ENCODE measurements at regions of chr1 and their contacts with region 1.

Region 1: GRCh38 chr1:192516776-192517297 is 58.7 kb upstream of the RGS1 start:
- DNase-seq: peak; percentile 63
- ATAC-seq: peak; percentile 97
- H3K4me3 Mint-ChIP-seq: peak overlapping the region; percentile 40
- H3K27ac Mint-ChIP-seq: peak overlapping the region; percentile 63
- H3K4me1 Mint-ChIP-seq: peaks cover 62% of the 10 kb centered on the region
- H3K27me3 Mint-ChIP-seq: no peaks in the 10 kb centered on the region

Region 2: GRCh38 chr1:192477630-192478029 is 39.2 kb before region 1 on chr1:
- CTCF ChIA-PET with region 1: interaction called, 13 read pairs
- POLR2A ChIA-PET with region 1: no interaction called
- intact Hi-C with region 1: loop called (anchors 5 kb)
- DNase-seq: no peak
- ATAC-seq: peak; percentile 67
- H3K4me3 Mint-ChIP-seq: no peak overlapping the region
- H3K27ac Mint-ChIP-seq: no peak overlapping the region
- H3K4me1 Mint-ChIP-seq: peaks cover 2% of the 10 kb centered on the region
- H3K27me3 Mint-ChIP-seq: no peaks in the 10 kb centered on the region

Region 3: DNA sequence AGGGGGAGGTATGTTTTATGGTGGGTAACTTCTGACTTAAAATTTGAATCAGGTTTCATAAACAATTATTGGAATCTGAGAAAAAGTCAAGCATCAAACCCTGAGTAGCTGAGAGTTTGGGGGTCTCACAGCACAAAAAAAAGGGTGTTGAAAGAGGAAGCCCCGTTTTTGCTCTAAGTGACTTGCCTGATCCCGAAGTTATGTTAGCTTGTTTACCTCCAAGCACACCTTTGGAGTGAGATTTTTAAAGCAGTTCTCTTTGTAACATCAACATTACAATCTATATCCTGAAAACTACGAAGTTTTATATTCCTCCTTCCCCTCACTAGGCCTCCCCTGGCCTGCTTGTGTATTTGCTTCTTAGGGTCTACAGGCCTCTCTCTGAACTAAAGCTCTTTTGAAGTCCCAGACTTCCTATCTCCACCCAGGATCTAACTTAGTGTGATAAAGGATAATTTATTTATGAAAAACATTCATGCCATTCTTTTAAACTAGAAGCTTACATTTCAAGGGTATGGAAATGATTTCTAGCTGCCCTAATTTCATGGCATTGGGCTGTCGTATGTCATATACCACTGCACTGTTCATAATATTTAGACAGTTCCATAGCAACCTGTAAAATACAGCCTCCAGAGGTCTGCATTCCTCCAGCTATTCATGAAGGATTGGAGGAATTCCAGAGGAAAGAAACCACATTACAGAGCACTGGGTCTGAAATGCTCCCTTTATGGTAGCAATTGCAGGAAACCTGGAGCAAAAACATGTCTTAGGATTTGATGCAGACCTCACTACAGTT is 22.7 kb after region 1 on chr1:
- CTCF ChIA-PET with region 1: interaction called, 10 read pairs
- POLR2A ChIA-PET with region 1: interaction called, 3 read pairs
- intact Hi-C with region 1: loop called in 1 of 2 experiments (anchors 2 kb)
- DNase-seq: no peak
- ATAC-seq: no peak
- H3K4me3 Mint-ChIP-seq: peak overlapping the region; percentile 4
- H3K27ac Mint-ChIP-seq: peak overlapping the region; percentile 76
- H3K4me1 Mint-ChIP-seq: peaks cover 41% of the 10 kb centered on the region
- H3K27me3 Mint-ChIP-seq: no peaks in the 10 kb centered on the region

Region 4: GRCh38 chr1:192550922-192551534 is 34.2 kb after region 1 on chr1:
- CTCF ChIA-PET with region 1: interaction called, 3 read pairs
- POLR2A ChIA-PET with region 1: no interaction called
- intact Hi-C with region 1: loop called (anchors 1 to 5 kb)
- DNase-seq: peak; percentile 32
- ATAC-seq: peak; percentile 88
- H3K4me3 Mint-ChIP-seq: peak overlapping the region; percentile 20
- H3K27ac Mint-ChIP-seq: peak overlapping the region; percentile 76
- H3K4me1 Mint-ChIP-seq: peaks cover 53% of the 10 kb centered on the region
- H3K27me3 Mint-ChIP-seq: no peaks in the 10 kb centered on the region

Region 5: DNA sequence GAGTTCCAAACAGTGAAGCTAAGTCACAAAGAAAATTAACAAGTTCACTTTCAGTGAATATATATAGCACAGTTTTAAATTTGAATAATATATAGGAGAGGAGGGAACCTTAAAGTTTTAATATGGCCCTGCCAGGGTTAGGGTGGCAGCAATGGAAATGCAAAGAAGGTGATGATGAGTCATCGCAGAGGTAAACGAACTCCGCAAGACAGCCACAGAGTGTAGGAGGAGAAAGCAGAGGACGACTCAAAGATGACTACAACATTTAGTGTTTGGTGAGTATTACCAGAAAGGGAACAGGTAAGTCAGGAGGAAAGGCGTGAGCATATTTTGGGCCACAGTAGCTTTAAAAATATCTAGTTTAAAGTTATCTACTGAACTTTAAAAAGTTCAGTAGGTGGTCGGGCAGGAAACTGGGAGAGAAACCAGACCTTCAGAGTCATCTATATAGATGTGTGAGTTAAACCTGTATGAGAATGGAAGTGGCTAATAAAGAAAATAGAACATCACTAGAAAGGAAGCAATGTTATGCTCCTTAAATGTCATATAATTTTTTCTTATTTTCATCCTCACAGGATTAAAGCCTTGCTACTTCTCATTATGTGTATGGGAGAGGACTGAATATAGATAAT is 466.6 kb after region 1 on chr1:
- CTCF ChIA-PET with region 1: no interaction called
- POLR2A ChIA-PET with region 1: interaction called, 4 read pairs
- intact Hi-C with region 1: loop called in 1 of 2 experiments (anchors 1 kb)
- DNase-seq: peak; percentile 67
- ATAC-seq: peak; percentile 84
- H3K4me3 Mint-ChIP-seq: no peak overlapping the region
- H3K27ac Mint-ChIP-seq: peak overlapping the region; percentile 76
- H3K4me1 Mint-ChIP-seq: peaks cover 39% of the 10 kb centered on the region
- H3K27me3 Mint-ChIP-seq: no peaks in the 10 kb centered on the region